Sigmoid colon (tissue), 7 donors: ENCODE measurements at regions of chr3 and their contacts with region 1.

Region 1: GRCh38 chr3:63911873-63912767 is at the start of gene SCAANT1:
- DNase-seq: peak; percentile 97
- H3K4me3 ChIP-seq: peak within 1 kb of the TSS; percentile 44 to 93 (median 76)
- H3K27ac ChIP-seq: peak within 1 kb of the TSS; percentile 97 to 99 (median 98)
- H3K4me1 ChIP-seq: peaks cover 0 to 33% (median 28%) of the 10 kb centered on the region in 4 donors
- H3K27me3 ChIP-seq: no peaks in the 10 kb centered on the region
- CTCF ChIP-seq: peak in 1 of 4 experiments; percentile 10
- EP300 ChIP-seq: peak in 1 of 4 donors; percentile 28
- POLR2A ChIP-seq: peak; percentile 36 to 50
- total RNA-seq, gene SCAANT1: not detected

Region 2: GRCh38 chr3:63791974-63792545 is 120.1 kb before region 1 on chr3:
- intact Hi-C with region 1: no loop called
- DNase-seq: no peak
- H3K4me3 ChIP-seq: no peak overlapping the region
- H3K27ac ChIP-seq: no peak overlapping the region
- H3K4me1 ChIP-seq: no peaks in the 10 kb centered on the region
- H3K27me3 ChIP-seq: no peaks in the 10 kb centered on the region
- CTCF ChIP-seq: no peak
- EP300 ChIP-seq: no peak
- POLR2A ChIP-seq: no peak

Region 3: GRCh38 chr3:63863148-63864007 is 48.7 kb before region 1 on chr3 and contains the starts of genes ATXN7 and THOC7:
- intact Hi-C with region 1: loop called (anchors 1 kb)
- DNase-seq: peak; percentile 83
- H3K4me3 ChIP-seq: peak within 1 kb of the TSS; percentile 95 to 99 (median 98)
- H3K27ac ChIP-seq: peak within 1 kb of the TSS; percentile 84 to 95 (median 94)
- H3K4me1 ChIP-seq: peaks cover 0 to 33% (median 25%) of the 10 kb centered on the region in 4 donors
- H3K27me3 ChIP-seq: no peaks in the 10 kb centered on the region
- CTCF ChIP-seq: no peak
- EP300 ChIP-seq: no peak
- POLR2A ChIP-seq: no peak
- total RNA-seq, gene ATXN7: 17.8 to 32.7 (median 27.3) TPM
- total RNA-seq, gene THOC7: 76.6 to 129 (median 115) TPM

Region 4: DNA sequence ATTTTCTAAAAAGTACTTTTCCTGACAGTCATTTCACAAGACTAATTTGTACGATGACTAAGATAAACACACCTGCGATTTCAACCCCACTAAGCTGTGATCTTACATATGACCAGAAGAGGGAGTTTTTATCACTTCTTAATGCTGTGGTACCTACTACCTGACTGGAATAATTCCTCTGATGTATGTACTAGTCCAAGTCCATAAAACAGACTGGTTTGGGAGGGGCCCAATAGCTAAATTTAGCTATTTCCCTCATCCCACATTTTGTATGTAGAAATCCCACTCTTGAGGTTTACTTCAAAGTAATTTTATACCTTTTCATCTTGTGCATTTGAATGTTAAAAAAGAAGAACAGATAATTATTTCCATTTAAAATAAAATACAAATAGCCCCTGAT is 49.8 kb after region 1 on chr3:
- intact Hi-C with region 1: loop called (anchors 2 kb)
- DNase-seq: no peak
- H3K4me3 ChIP-seq: no peak overlapping the region
- H3K27ac ChIP-seq: peak overlapping the region in 2 of 4 donors; percentile 75 to 82
- H3K4me1 ChIP-seq: peaks cover 0 to 78% (median 50%) of the 10 kb centered on the region in 4 donors
- H3K27me3 ChIP-seq: no peaks in the 10 kb centered on the region
- CTCF ChIP-seq: peak; percentile 49 to 73 (median 68)
- EP300 ChIP-seq: no peak
- POLR2A ChIP-seq: no peak